Activated CD4-positive, alpha-beta memory T cell treated with anti-CD3 and anti-CD28 coated beads, Interleukin-2, amount 10 ng/mL, durations not matched to agents 7 days and 5 days (primary cell): ENCODE measurements at regions of chr3 and their contacts with region 1.

Region 1: DNA sequence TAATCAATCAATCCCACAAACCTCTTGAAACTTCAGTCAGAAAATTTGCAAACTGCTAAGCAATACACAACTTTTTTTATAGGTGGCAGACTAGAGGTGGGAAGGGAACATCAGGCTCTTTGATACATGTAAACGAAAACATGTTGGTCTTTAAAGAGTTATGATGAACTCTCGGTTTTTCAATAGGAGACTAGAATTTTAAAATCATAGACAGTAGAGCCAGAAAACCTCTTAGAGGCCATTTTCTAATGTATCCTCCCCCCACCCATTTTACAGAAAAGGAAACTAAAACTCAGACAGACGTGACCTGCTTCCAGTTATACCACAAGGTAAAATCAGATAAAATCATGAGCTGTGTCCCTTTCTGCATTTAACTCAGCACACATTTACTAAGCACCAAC is 179.1 kb upstream of the LPP start:
- DNase-seq: no peak
- H3K4me3 Mint-ChIP-seq: peak overlapping the region; percentile 37
- H3K27ac Mint-ChIP-seq: peak overlapping the region; percentile 87
- H3K4me1 Mint-ChIP-seq: peaks cover 64% of the 10 kb centered on the region
- H3K27me3 Mint-ChIP-seq: no peaks in the 10 kb centered on the region

Region 2: DNA sequence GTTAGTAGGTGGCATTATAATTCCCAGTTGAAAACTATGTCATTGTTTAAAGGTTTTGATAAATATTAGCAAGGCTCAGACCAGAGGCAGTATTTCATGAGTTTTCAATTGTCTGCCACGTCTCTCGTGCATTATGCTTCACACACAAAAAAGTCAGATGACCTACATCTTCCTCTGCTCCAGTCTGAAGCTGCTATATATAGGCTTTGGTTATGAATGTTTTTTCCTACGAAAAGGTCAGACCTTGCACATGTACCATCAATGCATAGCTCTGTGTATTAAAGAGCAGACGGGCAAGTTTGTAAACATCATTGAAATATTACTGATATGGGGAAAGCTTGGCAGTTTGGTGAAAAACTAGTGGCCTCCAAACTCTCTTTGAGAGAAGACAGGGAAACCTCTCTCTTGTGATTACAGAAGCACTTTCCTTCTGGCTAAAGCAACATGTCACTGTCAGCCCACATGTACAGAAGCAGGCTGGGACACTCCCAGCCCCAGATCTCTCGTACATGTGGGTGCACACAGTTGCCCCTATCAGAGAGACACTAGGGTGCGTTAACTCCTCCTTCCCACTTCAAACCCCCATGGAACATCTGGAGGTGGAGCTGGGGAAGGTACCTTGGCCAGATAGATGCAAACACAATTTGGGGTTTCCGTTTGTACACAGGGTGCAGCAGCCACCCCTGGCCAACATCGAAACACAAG is 45.6 kb before region 1 on chr3:
- CTCF ChIA-PET with region 1: no interaction called
- POLR2A ChIA-PET with region 1: no interaction called
- DNase-seq: no peak
- H3K4me3 Mint-ChIP-seq: no peak overlapping the region
- H3K27ac Mint-ChIP-seq: no peak overlapping the region
- H3K4me1 Mint-ChIP-seq: peaks cover 20% of the 10 kb centered on the region
- H3K27me3 Mint-ChIP-seq: peaks cover 33% of the 10 kb centered on the region

Region 3: DNA sequence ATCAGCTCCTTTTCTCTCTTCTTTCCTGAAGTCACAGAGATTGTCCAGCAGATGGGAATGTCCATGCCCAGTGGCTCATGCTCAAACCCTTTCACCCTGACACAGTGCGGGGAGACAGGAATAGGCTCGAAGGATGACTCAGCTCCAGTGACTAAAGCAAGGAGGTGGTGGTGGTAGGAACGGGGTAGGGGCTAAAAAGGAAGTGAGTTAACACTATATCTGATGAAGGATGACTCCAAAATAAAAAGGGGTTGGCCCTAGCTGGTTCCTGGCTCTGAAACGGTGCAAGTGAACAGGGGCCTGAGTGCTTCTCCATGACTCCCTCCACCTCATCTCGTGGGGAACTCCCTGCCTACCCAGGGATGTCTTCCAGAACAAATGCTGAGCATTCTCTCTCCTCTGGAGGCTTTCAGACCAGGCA is 11.7 kb after region 1 on chr3:
- CTCF ChIA-PET with region 1: interaction called, 9 read pairs
- POLR2A ChIA-PET with region 1: interaction called, 23 read pairs
- DNase-seq: peak; percentile 60
- H3K4me3 Mint-ChIP-seq: peak overlapping the region; percentile 6
- H3K27ac Mint-ChIP-seq: peak overlapping the region; percentile 74
- H3K4me1 Mint-ChIP-seq: peaks cover 51% of the 10 kb centered on the region
- H3K27me3 Mint-ChIP-seq: no peaks in the 10 kb centered on the region

Region 4: DNA sequence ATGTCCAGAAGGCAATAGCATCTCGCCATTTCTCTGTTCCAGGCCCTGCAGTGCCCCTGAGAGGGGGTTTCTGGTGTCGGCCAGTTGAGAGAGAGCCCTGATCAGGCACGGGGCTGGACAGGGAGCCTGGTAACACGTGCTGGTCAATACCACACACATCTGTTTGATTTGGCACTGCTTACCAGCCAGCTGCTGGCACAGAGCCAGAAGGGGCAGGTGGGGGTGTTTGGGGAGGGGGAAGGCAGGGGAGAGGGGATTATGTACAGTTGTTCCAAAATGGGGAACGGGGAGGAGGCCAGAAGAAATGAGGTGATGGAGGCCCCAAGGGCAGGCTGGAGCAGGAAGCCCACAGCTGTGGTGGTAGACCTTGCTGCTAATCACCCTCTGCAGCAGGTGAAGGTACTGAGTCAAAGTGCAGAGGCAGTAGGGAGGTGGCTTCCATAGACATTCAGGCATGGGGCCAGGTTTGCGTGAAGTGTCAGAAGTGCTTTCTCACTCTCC is 25.5 kb after region 1 on chr3:
- CTCF ChIA-PET with region 1: interaction called, 12 read pairs
- POLR2A ChIA-PET with region 1: interaction called, 16 read pairs
- DNase-seq: peak; percentile 29
- H3K4me3 Mint-ChIP-seq: peak overlapping the region; percentile 72
- H3K27ac Mint-ChIP-seq: peak overlapping the region; percentile 99
- H3K4me1 Mint-ChIP-seq: peaks cover 74% of the 10 kb centered on the region
- H3K27me3 Mint-ChIP-seq: no peaks in the 10 kb centered on the region

Region 5: DNA sequence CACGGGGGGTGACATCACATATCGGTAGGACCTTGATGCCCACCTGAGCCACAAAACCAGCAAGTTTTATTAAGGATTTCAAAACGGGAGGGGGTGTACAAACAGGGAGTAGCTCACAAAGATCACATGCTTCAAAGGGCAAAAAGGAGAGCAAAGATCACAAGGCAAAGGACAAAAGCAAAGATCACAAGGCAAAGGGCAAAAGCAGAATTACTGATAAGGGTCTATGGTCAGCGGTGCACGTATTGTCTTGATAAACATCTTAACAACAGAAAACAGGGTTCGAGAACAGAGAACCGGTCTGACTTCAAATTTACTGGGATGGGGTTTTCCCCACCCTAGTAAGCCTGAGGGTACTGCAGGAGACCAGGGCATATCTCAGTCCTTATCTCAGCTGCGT is 35.6 kb after region 1 on chr3:
- CTCF ChIA-PET with region 1: no interaction called
- POLR2A ChIA-PET with region 1: no interaction called
- DNase-seq: no peak
- H3K4me3 Mint-ChIP-seq: no peak overlapping the region
- H3K27ac Mint-ChIP-seq: no peak overlapping the region
- H3K4me1 Mint-ChIP-seq: peaks cover 23% of the 10 kb centered on the region
- H3K27me3 Mint-ChIP-seq: peaks cover 6% of the 10 kb centered on the region